ENCODE measurements at regions of chr11 and their contacts with region 1.

Region 1: GRCh38 chr11:10808553-10809372 is at the start of gene EIF4G2:
- DNase-seq: peak; percentile 99
- H3K4me3 ChIP-seq: peak within 1 kb of the TSS; percentile 95
- H3K27ac ChIP-seq: peak within 1 kb of the TSS; percentile 99
- H3K4me1 ChIP-seq: peaks cover 10% of the 10 kb centered on the region
- H3K27me3 ChIP-seq: no peaks in the 10 kb centered on the region
- CTCF ChIP-seq: no peak
- total RNA-seq, gene EIF4G2: 1,073 to 1,080 TPM

Region 2: DNA sequence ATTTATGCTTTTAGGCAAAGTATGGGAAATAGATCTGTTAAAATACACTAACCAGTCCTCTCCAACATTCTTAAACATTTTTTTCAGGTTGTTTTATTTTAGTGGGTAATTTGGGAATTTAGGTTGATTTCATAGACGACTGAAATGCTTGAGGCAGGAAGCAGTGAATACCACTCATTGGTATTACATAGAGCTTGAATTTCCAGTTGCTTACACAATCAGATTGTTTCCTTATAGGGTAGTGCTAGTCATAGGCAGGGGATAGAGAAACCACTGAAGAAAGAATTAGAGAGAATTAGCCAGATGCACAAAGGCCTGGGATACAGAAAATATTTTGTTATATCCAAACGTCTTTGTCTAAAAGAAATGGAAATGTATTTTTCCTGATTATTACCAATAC is 216.4 kb before region 1 on chr11:
- intact Hi-C with region 1: no loop called
- DNase-seq: no peak
- H3K4me3 ChIP-seq: no peak overlapping the region
- H3K27ac ChIP-seq: no peak overlapping the region
- H3K4me1 ChIP-seq: no peaks in the 10 kb centered on the region
- H3K27me3 ChIP-seq: no peaks in the 10 kb centered on the region
- CTCF ChIP-seq: no peak

Region 3: GRCh38 chr11:10844796-10845195 is 36.0 kb after region 1 on chr11:
- intact Hi-C with region 1: loop called (anchors 5 kb)
- DNase-seq: no peak
- H3K4me3 ChIP-seq: no peak overlapping the region
- H3K27ac ChIP-seq: no peak overlapping the region
- H3K4me1 ChIP-seq: no peaks in the 10 kb centered on the region
- H3K27me3 ChIP-seq: no peaks in the 10 kb centered on the region
- CTCF ChIP-seq: no peak

Region 4: DNA sequence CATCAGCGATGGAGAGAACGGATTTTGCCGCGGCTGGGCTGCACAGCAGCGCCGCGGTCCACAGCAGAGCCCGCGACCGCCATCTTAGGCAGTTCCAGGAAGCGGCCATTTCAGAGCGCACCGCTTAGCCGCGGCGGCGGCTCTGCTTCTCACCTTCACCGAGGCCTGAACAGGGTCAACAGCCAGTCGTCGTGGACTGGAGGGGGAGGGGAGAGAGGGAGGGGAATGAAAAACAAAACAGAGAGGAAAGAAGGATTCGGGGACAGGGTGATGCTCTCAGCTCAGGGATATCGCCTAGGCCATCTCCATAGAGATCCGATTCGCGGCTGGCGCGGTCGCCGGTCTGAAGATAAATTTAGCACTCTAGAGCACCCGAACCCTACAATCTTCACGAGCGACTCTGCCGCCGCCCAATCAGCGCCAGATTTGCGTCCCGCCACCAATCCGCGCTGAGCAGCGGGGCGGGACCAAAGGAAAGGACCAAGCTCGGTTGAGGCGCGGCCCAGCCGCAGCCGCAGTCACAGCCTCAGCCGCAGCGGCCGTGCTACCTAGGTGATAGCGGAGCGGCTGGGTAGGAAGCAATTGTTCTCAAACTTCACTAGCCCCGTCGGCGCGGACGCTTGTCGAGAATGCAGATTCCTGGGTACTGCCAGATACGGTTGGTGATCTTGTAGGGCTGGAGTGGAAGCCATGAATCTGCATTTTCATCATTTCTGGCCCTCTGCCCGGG is 49.1 kb after region 1 on chr11 and contains the start of gene ZBED5:
- intact Hi-C with region 1: loop called (anchors 1 kb)
- DNase-seq: peak; percentile 98
- H3K4me3 ChIP-seq: peak within 1 kb of the TSS; percentile 73
- H3K27ac ChIP-seq: peak within 1 kb of the TSS; percentile 100
- H3K4me1 ChIP-seq: no peaks in the 10 kb centered on the region
- H3K27me3 ChIP-seq: no peaks in the 10 kb centered on the region
- CTCF ChIP-seq: no peak
- total RNA-seq, gene ZBED5: 37.1 to 38.6 TPM

Measured in colonic mucosa (tissue), 4 donors.